K562 (cell line): ENCODE measurements at regions of chr17 and their contacts with region 1.

Region 1: GRCh38 chr17:82320956-82321927 is 3.8 kb upstream of the CD7 start:
- DNase-seq: peak; percentile 66 to 87 (median 83)
- ATAC-seq: peak; percentile 87
- H3K4me3 ChIP-seq: no peak overlapping the region
- H3K27ac ChIP-seq: no peak overlapping the region
- H3K4me1 ChIP-seq: peaks cover 43 to 99% of the 10 kb centered on the region in 2 experiments
- H3K27me3 ChIP-seq: no peaks in the 10 kb centered on the region
- CTCF ChIP-seq: peak; percentile 65 to 87 (median 77)
- EP300 ChIP-seq: no peak
- POLR2A ChIP-seq: no peak
- RAD21 ChIP-seq: peak; percentile 88 to 92

Region 2: GRCh38 chr17:82244413-82245140 is 76.7 kb before region 1 on chr17:
- CTCF ChIA-PET with region 1: no interaction called
- POLR2A ChIA-PET with region 1: no interaction called
- in situ Hi-C with region 1: no loop called
- intact Hi-C with region 1: loop called (anchors 1 kb)
- DNase-seq: peak in 3 of 4 experiments; percentile 41 to 49 (median 48)
- ATAC-seq: 0 out of 3 replicates have a peak, but pooled peaks have one; percentile 14
- H3K4me3 ChIP-seq: no peak overlapping the region
- H3K27ac ChIP-seq: no peak overlapping the region
- H3K4me1 ChIP-seq: peaks cover 30 to 74% of the 10 kb centered on the region in 2 experiments
- H3K27me3 ChIP-seq: no peaks in the 10 kb centered on the region
- CTCF ChIP-seq: peak; percentile 56 to 67 (median 65)
- EP300 ChIP-seq: no peak
- POLR2A ChIP-seq: no peak
- RAD21 ChIP-seq: peak; percentile 37 to 70